ENCODE measurements at regions of chr17 and their contacts with region 1.

Region 1: DNA sequence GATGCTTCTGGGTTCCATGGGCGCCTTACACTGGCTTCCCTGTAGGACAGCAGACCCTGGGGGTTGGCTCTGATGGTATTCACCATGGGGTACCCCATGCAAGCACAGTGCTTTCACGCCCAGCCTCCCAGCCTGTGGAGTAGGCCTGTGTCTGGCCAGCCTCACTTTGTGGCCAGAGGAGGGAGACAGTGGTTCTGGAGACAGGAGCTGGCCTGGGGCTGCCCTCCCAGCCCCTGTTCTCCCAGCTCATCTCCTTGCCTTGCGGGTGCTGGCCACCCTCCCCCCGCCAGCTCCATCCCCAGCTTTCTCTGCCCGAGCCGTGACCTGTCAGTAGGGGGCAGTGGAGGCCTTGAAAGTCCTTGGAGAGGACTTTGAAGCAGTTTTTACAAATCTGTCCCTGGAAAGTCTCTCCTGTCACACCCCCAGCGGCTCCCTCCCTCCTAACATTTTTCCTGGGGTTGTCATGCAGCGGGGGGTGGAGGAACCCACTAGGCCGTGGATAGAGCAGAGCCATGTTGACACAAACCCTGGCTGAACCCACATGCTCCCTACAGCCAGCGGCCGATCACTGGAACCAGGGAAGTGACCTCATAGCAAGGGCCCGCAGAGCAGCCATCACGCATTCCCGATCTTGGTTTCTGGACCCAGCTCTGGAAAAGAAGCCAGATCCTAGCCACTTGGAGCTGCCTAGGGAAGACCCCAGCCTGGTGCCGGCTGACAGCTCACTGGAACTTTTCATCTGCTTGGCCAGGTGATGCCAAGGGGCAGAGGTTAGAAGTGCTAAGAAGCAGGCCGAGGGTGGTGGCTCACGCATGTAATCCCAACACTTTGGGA is 289.4 kb downstream of the SEC14L1 start:
- DNase-seq: peak; percentile 74 to 84 (median 77)
- H3K4me3 ChIP-seq: no peak overlapping the region
- H3K4me3 Mint-ChIP-seq: peak overlapping the region in 5 of 8 donors; percentile 29 to 68 (median 47)
- H3K27ac ChIP-seq: no peak overlapping the region
- H3K27ac Mint-ChIP-seq: peak overlapping the region; percentile 64 to 90 (median 80)
- H3K4me1 ChIP-seq: peaks cover 100% of the 10 kb centered on the region
- H3K4me1 Mint-ChIP-seq: peaks cover 55 to 96% (median 78%) of the 10 kb centered on the region in 4 donors
- H3K27me3 ChIP-seq: no peaks in the 10 kb centered on the region
- H3K27me3 Mint-ChIP-seq: no peaks in the 10 kb centered on the region

Region 2: GRCh38 chr17:77382966-77383612 is 47.0 kb before region 1 on chr17:
- CTCF ChIA-PET with region 1: interaction called, 12 read pairs
- POLR2A ChIA-PET with region 1: interaction called, 6,031 read pairs
- intact Hi-C with region 1: no loop called
- DNase-seq: no peak
- H3K4me3 ChIP-seq: peak overlapping the region in 1 of 2 donors; percentile 41
- H3K4me3 Mint-ChIP-seq: peak overlapping the region; percentile 74 to 94 (median 82)
- H3K27ac ChIP-seq: peak overlapping the region; percentile 50
- H3K27ac Mint-ChIP-seq: peak overlapping the region; percentile 82 to 95 (median 90)
- H3K4me1 ChIP-seq: peaks cover 98% of the 10 kb centered on the region
- H3K4me1 Mint-ChIP-seq: peaks cover 56 to 97% (median 84%) of the 10 kb centered on the region in 4 donors
- H3K27me3 ChIP-seq: no peaks in the 10 kb centered on the region
- H3K27me3 Mint-ChIP-seq: no peaks in the 10 kb centered on the region

Region 3: DNA sequence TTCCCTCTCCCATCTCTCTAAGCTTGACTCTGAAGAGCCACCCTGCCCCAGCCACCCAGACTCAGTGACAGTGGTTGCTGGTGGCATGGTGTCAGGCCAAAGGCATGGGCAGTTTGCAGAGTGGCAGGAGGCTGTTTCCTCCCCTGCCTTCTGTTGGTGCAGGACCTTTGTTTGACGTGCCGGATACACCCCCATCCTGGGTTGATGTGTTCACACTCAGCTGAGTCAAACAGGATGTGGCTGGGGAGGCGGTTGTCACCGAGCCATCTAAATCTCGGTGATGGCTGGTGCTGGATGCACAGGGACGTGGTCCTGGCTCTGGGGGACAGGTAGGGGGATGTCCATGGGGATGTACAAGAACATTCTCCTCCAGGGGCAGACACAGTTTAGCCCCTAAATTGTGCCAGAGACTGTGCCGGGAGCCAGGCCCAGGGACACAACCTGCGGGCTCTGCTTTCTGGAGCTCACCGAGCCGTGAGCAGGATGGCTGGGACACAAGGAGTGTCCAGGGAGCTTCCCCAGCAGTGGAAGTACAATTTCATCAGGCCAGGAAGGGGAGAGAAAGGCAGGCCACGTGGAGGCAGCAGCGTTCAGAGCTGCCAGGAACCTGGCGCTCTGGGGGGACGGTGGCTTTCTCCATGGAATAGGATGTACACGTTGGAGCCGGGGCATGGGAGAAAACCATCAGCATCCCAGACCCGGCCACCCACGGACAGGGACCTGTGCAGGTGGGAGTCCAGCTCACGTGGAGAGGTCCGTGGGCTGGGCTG is 25.1 kb before region 1 on chr17:
- CTCF ChIA-PET with region 1: interaction called, 81 read pairs
- POLR2A ChIA-PET with region 1: interaction called, 6,031 read pairs
- intact Hi-C with region 1: loop called (anchors 2 kb)
- DNase-seq: peak; percentile 78 to 92 (median 83)
- H3K4me3 ChIP-seq: peak overlapping the region; percentile 59 to 88
- H3K4me3 Mint-ChIP-seq: peak overlapping the region; percentile 94 to 99 (median 96)
- H3K27ac ChIP-seq: peak overlapping the region; percentile 87
- H3K27ac Mint-ChIP-seq: peak overlapping the region; percentile 96 to 100 (median 98)
- H3K4me1 ChIP-seq: peaks cover 97% of the 10 kb centered on the region
- H3K4me1 Mint-ChIP-seq: peaks cover 59 to 100% (median 81%) of the 10 kb centered on the region in 4 donors
- H3K27me3 ChIP-seq: no peaks in the 10 kb centered on the region
- H3K27me3 Mint-ChIP-seq: no peaks in the 10 kb centered on the region

Region 4: DNA sequence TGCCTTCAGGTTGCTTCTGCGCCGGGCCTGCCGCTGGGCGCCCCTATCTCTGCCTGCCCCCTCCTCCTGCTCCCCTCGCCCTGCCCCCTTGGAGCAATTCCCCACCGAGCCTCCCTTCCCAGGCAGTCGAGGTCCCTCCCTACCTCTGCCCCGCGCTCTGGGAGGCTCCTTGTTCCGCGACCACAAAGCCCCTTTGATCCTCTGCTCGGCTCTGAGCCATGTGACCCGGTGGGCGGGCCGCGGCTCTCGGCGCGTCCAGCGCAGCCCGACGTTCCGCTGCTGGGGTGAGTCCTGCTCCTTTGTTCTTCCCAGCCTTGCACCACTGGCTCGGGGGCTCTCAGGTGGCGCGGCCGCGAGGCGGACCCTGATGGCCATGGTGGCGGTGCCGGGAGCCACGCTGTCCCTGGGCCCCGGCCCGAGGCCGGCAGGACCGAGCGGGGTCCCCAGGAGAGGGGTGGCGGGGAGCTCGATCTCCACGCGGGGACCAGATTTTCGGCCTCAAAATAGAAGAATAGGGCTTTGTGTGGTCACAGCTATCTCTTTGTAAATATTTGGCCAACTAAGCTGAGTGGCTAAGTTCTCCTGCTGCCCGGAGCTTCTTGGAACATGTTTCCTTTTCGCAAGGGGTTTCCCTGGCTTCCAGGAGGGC is 21.2 kb after region 1 on chr17:
- CTCF ChIA-PET with region 1: interaction called, 32 read pairs
- POLR2A ChIA-PET with region 1: interaction called, 6,031 read pairs
- intact Hi-C with region 1: no loop called
- DNase-seq: peak; percentile 65 to 83 (median 73)
- H3K4me3 ChIP-seq: peak overlapping the region; percentile 94 to 96
- H3K4me3 Mint-ChIP-seq: peak overlapping the region; percentile 90 to 100 (median 96)
- H3K27ac ChIP-seq: peak overlapping the region; percentile 73
- H3K27ac Mint-ChIP-seq: peak overlapping the region; percentile 81 to 100 (median 98)
- H3K4me1 ChIP-seq: peaks cover 61% of the 10 kb centered on the region
- H3K4me1 Mint-ChIP-seq: peaks cover 25 to 91% (median 45%) of the 10 kb centered on the region in 4 donors
- H3K27me3 ChIP-seq: no peaks in the 10 kb centered on the region
- H3K27me3 Mint-ChIP-seq: no peaks in the 10 kb centered on the region

Region 5: DNA sequence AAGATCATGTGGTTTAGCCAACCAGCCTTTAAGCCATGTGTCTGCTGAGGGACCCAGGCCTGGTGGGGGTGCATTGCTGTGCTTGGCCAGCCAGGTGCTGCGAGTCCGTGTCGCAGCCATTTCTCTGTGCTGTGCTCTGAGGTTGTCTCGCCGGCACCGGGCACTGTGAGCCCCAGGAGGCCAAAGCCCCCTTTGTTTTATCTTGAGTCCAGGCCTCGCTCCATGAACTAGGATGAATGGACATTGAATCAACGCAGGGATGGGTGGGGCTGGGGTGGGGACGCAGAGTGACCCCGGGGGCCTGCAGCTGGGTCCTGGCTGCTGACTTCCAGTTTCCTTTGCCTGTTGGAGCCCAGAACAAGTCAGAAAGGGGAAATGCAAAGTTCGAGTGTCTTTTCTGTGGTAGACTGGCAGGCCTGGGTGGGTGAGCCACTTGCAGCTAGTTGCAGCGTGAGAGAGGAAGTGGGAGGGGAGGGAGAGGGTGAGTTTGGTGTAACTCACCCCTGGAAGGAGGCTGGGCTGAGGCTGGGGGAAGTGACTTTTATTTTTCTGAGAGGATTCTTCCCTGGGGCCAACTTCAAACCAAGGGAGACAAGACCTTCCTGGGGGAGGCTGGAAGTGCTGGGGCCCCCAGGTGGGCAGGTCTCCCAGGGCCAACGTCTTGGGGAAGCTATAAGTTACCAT is 35.4 kb after region 1 on chr17:
- CTCF ChIA-PET with region 1: interaction called, 14 read pairs
- POLR2A ChIA-PET with region 1: interaction called, 6,031 read pairs
- intact Hi-C with region 1: loop called (anchors 5 kb)
- DNase-seq: peak; percentile 82 to 94 (median 84)
- H3K4me3 ChIP-seq: peak overlapping the region; percentile 6 to 47
- H3K4me3 Mint-ChIP-seq: peak overlapping the region; percentile 80 to 90 (median 84)
- H3K27ac ChIP-seq: peak overlapping the region; percentile 50
- H3K27ac Mint-ChIP-seq: peak overlapping the region; percentile 83 to 97 (median 85)
- H3K4me1 ChIP-seq: peaks cover 99% of the 10 kb centered on the region
- H3K4me1 Mint-ChIP-seq: peaks cover 60 to 95% (median 79%) of the 10 kb centered on the region in 4 donors
- H3K27me3 ChIP-seq: no peaks in the 10 kb centered on the region
- H3K27me3 Mint-ChIP-seq: no peaks in the 10 kb centered on the region

Region 6: DNA sequence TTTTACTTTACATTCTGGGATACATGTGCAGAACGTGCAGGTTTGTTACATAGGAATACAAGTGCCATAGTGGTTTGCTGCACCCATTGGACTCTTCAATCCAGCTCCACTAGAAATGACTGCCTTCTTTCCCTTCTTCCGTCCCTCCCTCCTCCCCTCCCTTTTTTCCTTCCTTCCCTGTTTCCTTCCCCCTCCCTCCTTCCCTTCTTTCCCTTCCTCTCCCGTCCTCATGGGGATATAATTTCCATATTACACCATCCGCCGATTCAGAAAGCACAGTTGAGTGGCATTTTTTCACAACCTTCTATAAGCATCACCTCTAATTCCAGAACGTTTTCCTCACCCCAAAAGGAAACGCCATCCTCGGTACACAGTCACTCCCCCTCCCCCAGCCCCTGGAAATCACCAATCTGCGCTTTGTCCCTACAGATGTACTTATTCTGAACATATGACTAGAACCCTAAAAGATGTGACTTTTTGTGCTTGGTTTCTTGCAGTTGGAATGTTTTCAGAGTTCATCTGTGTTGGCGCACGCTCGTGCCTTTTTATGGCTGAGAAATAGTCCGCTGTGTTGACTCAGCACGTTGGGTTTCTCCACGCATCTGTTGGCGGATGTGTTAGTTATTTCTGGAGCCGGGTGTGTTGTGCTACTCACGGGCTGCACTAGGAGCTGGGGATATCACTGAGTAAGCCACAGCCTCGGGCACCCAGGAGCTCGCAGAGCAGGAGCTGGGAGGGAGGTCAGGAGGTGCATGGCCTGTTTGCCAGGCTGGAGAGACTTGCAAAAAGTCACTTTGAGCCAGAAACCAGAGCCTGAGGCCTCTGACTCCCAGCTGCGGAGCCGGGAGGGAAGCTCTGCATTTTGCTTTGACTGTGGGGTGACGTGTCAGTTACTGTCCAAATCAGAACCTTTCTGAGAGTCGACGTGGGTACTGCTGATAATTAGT is 47.1 kb after region 1 on chr17:
- CTCF ChIA-PET with region 1: interaction called, 22 read pairs
- POLR2A ChIA-PET with region 1: interaction called, 16 read pairs
- intact Hi-C with region 1: no loop called
- DNase-seq: peak in 1 of 5 donors; percentile 43
- H3K4me3 ChIP-seq: no peak overlapping the region
- H3K4me3 Mint-ChIP-seq: peak overlapping the region in 6 of 8 donors; percentile 33 to 75 (median 55)
- H3K27ac ChIP-seq: peak overlapping the region; percentile 30
- H3K27ac Mint-ChIP-seq: peak overlapping the region; percentile 74 to 94 (median 87)
- H3K4me1 ChIP-seq: peaks cover 99% of the 10 kb centered on the region
- H3K4me1 Mint-ChIP-seq: peaks cover 57 to 83% (median 69%) of the 10 kb centered on the region in 4 donors
- H3K27me3 ChIP-seq: no peaks in the 10 kb centered on the region
- H3K27me3 Mint-ChIP-seq: no peaks in the 10 kb centered on the region

Region 7: GRCh38 chr17:77700165-77700881 is 270.2 kb after region 1 on chr17:
- CTCF ChIA-PET with region 1: no interaction called
- POLR2A ChIA-PET with region 1: no interaction called
- intact Hi-C with region 1: no loop called
- DNase-seq: no peak
- H3K4me3 ChIP-seq: no peak overlapping the region
- H3K4me3 Mint-ChIP-seq: no peak overlapping the region
- H3K27ac ChIP-seq: no peak overlapping the region
- H3K27ac Mint-ChIP-seq: no peak overlapping the region
- H3K4me1 ChIP-seq: no peaks in the 10 kb centered on the region
- H3K4me1 Mint-ChIP-seq: peaks cover 4 to 16% (median 10%) of the 10 kb centered on the region in 4 donors
- H3K27me3 ChIP-seq: no peaks in the 10 kb centered on the region
- H3K27me3 Mint-ChIP-seq: peaks cover 0 to 7% of the 10 kb centered on the region in 2 donors

Measured in CD4-positive, alpha-beta memory T cell (primary cell).